ENCODE measurements at regions of chr20 and their contacts with region 1.

Region 1: DNA sequence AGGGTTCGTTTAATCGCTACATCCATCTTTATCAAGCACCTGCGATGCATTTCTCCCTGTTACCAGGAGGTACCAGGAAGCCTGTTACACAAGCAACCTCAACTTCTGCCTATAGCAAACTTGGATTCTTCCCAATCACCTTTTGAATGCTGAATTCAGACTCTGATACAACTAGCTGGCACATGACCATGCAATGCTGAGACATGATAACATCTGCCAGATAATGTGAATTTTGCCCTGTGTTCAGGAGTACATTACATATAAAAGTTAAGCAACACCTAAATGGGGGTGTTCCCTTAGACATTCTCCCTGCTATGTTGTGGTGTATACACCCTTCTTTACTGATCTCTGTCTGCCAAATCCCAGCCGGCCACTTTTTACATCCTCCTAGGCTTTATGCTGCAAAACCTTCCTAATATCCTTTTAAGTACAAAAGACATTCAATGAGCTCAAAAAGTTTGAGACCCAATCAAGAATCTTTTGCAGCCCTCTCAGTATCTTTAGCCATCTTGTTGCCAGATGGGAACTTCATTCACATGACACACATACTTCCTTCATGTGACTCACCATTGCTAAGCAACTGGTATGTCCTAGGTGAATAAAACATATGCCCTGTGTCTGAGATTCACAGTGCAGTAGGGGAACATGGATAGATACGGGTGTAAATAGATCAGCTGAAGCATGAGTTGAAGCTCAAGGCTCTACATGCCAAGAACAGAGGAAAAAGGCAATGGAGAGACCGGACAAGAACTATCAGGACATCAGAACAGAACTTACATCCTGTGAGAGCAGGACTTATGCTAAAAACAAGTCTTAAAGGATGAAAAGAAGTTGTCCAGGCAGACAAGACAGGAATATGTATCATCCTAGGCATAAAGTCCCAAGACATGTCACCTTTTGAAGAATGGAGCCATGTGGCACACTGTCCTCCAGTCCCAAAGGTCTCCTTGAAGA is 84.3 kb downstream of the ZHX3 start:
- DNase-seq: no peak
- ATAC-seq: peak; percentile 56
- H3K4me3 Mint-ChIP-seq: no peak overlapping the region
- H3K27ac Mint-ChIP-seq: peak overlapping the region; percentile 36
- H3K4me1 Mint-ChIP-seq: peaks cover 26% of the 10 kb centered on the region
- H3K27me3 Mint-ChIP-seq: no peaks in the 10 kb centered on the region
- CTCF ChIP-seq: no peak

Region 2: DNA sequence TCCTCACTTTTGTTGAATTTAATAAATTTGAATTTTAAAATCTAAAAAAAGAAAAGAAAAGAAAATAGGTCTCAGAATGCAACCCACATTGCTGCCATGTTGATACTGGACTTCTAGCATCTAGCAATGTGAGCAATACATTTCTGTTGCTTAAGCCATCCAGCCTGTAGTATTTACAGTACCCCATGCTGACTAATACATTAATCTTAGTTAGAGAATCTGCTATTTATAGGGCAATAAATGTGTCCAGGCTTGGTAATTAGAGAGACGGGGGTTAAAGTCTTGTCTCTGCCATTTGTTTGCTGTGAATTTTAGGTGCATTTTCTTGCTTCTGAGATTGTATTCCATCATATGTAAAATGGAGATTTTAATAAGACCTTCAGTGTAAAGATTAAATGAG is 1799.8 kb before region 1 on chr20:
- CTCF ChIA-PET with region 1: no interaction called
- POLR2A ChIA-PET with region 1: no interaction called
- intact Hi-C with region 1: no loop called
- DNase-seq: no peak
- ATAC-seq: no peak
- H3K4me3 Mint-ChIP-seq: no peak overlapping the region
- H3K27ac Mint-ChIP-seq: no peak overlapping the region
- H3K4me1 Mint-ChIP-seq: peaks cover 1% of the 10 kb centered on the region
- H3K27me3 Mint-ChIP-seq: no peaks in the 10 kb centered on the region
- CTCF ChIP-seq: no peak

Region 3: DNA sequence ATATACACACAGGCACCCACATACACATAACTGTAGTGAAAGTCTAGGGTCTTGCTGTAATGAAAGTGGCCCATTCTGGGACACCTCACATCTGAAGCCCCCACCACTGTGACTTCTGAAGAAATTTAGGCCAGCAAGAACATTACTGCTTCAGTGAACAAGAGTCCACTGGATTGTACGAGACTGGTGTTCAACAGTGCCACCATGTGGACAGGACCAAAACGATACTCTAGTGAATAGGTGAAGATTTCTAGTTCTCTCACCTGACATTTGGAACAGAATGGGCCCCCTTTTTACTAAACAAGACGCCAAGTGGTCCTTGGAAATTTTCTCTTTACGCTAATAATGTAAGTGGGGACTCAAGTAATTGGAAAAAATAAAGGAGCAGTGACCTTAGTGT is 701.1 kb before region 1 on chr20:
- CTCF ChIA-PET with region 1: no interaction called
- POLR2A ChIA-PET with region 1: no interaction called
- intact Hi-C with region 1: no loop called
- DNase-seq: no peak
- ATAC-seq: no peak
- H3K4me3 Mint-ChIP-seq: no peak overlapping the region
- H3K27ac Mint-ChIP-seq: no peak overlapping the region
- H3K4me1 Mint-ChIP-seq: no peaks in the 10 kb centered on the region
- H3K27me3 Mint-ChIP-seq: no peaks in the 10 kb centered on the region
- CTCF ChIP-seq: no peak

Region 4: DNA sequence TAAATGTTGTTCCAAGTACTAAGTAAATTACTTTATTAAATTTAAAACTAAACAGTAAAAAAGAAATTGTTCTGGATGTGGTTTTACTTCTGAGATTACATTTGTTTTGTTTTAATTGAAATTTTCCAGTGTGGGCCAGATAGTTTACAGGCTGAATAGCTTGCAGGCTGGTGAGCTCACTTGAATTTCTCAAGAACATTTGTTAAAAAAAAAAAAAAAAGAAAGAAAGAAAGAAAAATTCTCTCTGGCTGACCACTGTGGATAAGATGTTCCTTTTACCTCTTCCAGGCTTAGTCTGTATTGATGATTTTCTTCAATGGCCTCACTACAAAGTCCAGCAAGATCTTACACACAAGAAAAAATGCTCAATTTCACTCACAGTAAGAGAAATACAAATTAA is 10.5 kb before region 1 on chr20:
- CTCF ChIA-PET with region 1: interaction called, 11 read pairs
- POLR2A ChIA-PET with region 1: no interaction called
- intact Hi-C with region 1: no loop called
- DNase-seq: no peak
- ATAC-seq: no peak
- H3K4me3 Mint-ChIP-seq: no peak overlapping the region
- H3K27ac Mint-ChIP-seq: no peak overlapping the region
- H3K4me1 Mint-ChIP-seq: peaks cover 3% of the 10 kb centered on the region
- H3K27me3 Mint-ChIP-seq: no peaks in the 10 kb centered on the region
- CTCF ChIP-seq: no peak

Region 5: GRCh38 chr20:41249406-41250281 is 16.4 kb after region 1 on chr20:
- CTCF ChIA-PET with region 1: interaction called, 4 read pairs
- POLR2A ChIA-PET with region 1: no interaction called
- intact Hi-C with region 1: loop called (anchors 2 kb)
- DNase-seq: no peak
- ATAC-seq: peak; percentile 86
- H3K4me3 Mint-ChIP-seq: peak overlapping the region; percentile 56
- H3K27ac Mint-ChIP-seq: peak overlapping the region; percentile 84
- H3K4me1 Mint-ChIP-seq: peaks cover 62% of the 10 kb centered on the region
- H3K27me3 Mint-ChIP-seq: no peaks in the 10 kb centered on the region
- CTCF ChIP-seq: no peak

Region 6: GRCh38 chr20:41317536-41318270 is 84.5 kb after region 1 on chr20 and contains the start of gene ZHX3:
- CTCF ChIA-PET with region 1: no interaction called
- POLR2A ChIA-PET with region 1: interaction called, 3 read pairs
- intact Hi-C with region 1: loop called (anchors 1 kb)
- DNase-seq: peak; percentile 99
- ATAC-seq: peak; percentile 97
- H3K4me3 Mint-ChIP-seq: peak within 1 kb of the TSS; percentile 91
- H3K27ac Mint-ChIP-seq: peak within 1 kb of the TSS; percentile 87
- H3K4me1 Mint-ChIP-seq: peaks cover 23% of the 10 kb centered on the region
- H3K27me3 Mint-ChIP-seq: no peaks in the 10 kb centered on the region
- CTCF ChIP-seq: no peak
- total RNA-seq, gene ZHX3: 19.5 and 21.2 TPM in 2 replicates

Measured in activated B cell treated with CpG ODN at 0.5 μM for 24 hours (primary cell).